ENCODE measurements at regions of chr4 and their contacts with region 1.

Region 1: DNA sequence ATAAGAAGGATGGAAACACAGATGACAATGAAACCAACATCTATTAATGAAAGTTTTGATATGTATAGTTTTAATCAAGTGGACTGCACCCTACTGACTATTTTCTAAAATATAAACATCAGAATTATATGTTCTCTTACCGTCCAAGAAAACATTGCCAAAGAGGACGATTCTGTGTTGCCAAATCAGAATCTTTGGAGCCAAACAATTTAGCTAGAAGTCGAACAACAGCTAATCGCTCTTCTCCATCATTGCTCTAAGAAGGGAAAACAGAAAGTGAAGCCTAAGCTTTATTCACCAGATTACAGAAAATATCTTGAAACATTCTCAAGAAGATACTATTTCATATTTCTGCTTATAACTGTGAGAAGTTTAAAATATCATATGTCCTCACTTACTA is 64.2 kb downstream of the PDS5A start:
- DNase-seq: no peak
- ATAC-seq: no peak
- H3K4me3 ChIP-seq: no peak overlapping the region
- H3K4me3 Mint-ChIP-seq: no peak overlapping the region
- H3K27ac ChIP-seq: no peak overlapping the region
- H3K27ac Mint-ChIP-seq: no peak overlapping the region
- H3K4me1 ChIP-seq: no peaks in the 10 kb centered on the region
- H3K4me1 Mint-ChIP-seq: no peaks in the 10 kb centered on the region
- H3K27me3 ChIP-seq: no peaks in the 10 kb centered on the region
- H3K27me3 Mint-ChIP-seq: no peaks in the 10 kb centered on the region
- CTCF ChIP-seq: no peak

Region 2: DNA sequence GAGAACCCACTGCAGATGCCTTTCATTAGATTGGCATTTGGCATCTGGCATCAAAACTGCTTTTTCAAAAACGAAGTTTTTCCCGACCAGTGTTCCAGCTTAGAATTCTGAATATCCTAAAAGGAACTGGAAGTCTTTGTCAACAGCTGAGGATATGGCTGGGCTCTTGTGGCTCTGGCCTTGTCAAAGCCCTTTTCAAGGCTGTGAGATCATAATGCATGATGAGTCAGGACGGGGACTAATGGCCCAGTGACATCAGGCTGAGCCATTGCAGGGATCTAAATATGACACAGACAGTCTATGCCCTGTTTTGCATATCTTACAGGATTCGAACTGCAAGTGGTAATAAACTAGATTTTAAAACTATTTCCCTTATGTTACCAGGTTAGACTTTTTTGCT is 1646.9 kb before region 1 on chr4:
- CTCF ChIA-PET with region 1: no interaction called
- POLR2A ChIA-PET with region 1: interaction called, 11 read pairs
- intact Hi-C with region 1: no loop called
- DNase-seq: no peak
- ATAC-seq: no peak
- H3K4me3 ChIP-seq: no peak overlapping the region
- H3K4me3 Mint-ChIP-seq: no peak overlapping the region
- H3K27ac ChIP-seq: no peak overlapping the region
- H3K27ac Mint-ChIP-seq: no peak overlapping the region
- H3K4me1 ChIP-seq: no peaks in the 10 kb centered on the region
- H3K4me1 Mint-ChIP-seq: no peaks in the 10 kb centered on the region
- H3K27me3 ChIP-seq: no peaks in the 10 kb centered on the region
- H3K27me3 Mint-ChIP-seq: peaks cover under 1% of the 10 kb centered on the region
- CTCF ChIP-seq: no peak

Region 3: GRCh38 chr4:39873823-39874222 is 39.6 kb before region 1 on chr4:
- CTCF ChIA-PET with region 1: no interaction called
- POLR2A ChIA-PET with region 1: no interaction called
- intact Hi-C with region 1: loop called (anchors 1 kb)
- DNase-seq: no peak
- ATAC-seq: no peak
- H3K4me3 ChIP-seq: no peak overlapping the region
- H3K4me3 Mint-ChIP-seq: no peak overlapping the region
- H3K27ac ChIP-seq: no peak overlapping the region
- H3K27ac Mint-ChIP-seq: no peak overlapping the region
- H3K4me1 ChIP-seq: no peaks in the 10 kb centered on the region
- H3K4me1 Mint-ChIP-seq: no peaks in the 10 kb centered on the region
- H3K27me3 ChIP-seq: no peaks in the 10 kb centered on the region
- H3K27me3 Mint-ChIP-seq: no peaks in the 10 kb centered on the region
- CTCF ChIP-seq: no peak

Region 4: GRCh38 chr4:39942507-39942906 is 29.0 kb after region 1 on chr4:
- CTCF ChIA-PET with region 1: no interaction called
- POLR2A ChIA-PET with region 1: no interaction called
- intact Hi-C with region 1: no loop called
- DNase-seq: peak; percentile 47
- ATAC-seq: no peak
- H3K4me3 ChIP-seq: peak overlapping the region in 2 of 5 experiments; percentile 4 to 28
- H3K4me3 Mint-ChIP-seq: peak overlapping the region; percentile 40
- H3K27ac ChIP-seq: peak overlapping the region; percentile 23 to 55
- H3K27ac Mint-ChIP-seq: peak overlapping the region; percentile 23
- H3K4me1 ChIP-seq: peaks cover 47 to 59% of the 10 kb centered on the region in 2 donors
- H3K4me1 Mint-ChIP-seq: peaks cover 72% of the 10 kb centered on the region
- H3K27me3 ChIP-seq: no peaks in the 10 kb centered on the region
- H3K27me3 Mint-ChIP-seq: no peaks in the 10 kb centered on the region
- CTCF ChIP-seq: no peak

Measured in B cell (primary cell).